HEK293T (cell line): ENCODE measurements at regions of chr10 and their contacts with region 1.

Region 1: DNA sequence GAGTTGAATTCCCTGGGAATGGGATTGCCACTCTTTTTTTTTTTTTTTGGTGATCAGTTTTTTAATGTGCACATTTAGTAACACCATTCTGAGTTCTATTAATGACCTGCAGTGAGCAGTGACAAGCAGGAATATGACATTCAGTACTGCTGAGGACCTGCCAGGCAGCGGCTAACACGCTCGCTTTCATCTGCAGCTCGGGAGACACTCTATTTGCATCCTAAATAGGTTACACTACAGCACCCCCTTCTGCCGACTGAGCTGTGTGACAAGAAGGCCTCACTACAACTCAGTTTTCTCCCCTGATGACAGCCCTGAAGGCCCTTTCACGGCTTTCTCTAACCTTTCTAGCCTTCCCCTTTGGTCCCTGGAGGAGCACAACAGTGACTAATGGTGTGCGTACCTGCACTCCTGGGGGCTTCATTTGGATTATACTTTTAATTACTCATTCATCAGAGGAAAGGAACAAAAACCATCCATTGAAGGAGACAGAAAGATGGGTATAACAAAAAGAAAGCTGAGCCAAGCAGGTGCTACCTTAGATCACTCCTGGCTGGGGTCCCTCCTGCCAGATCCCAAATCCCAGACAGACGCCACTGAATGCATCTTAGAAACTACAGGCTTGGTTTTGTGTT is 872.4 kb downstream of the LRMDA start:
- DNase-seq: peak; percentile 81

Region 2: DNA sequence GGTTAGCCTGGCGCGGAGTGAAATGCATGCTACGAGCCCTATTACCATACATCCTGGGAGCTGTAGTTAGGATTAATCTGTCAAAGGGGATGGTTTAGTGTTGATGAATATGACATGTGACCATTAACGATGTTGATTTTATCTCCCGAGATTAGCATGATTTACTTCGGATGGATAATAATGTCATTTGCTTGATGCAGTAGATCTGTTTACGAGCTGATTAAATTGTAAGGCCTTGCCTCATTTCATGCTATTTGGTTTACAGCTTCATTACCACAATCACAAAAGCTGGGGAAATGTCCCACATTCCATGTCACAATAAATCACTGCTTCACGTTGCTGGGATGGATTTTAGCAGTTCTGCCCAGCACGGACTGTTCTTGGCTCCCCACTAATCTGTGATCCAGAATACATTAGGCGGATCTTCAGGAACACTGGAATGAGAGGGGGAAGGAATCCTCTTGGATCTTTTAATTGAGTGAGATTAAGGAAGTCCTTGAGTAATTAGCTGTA is 924.5 kb before region 1 on chr10:
- CTCF ChIA-PET with region 1: interaction called, 11 read pairs
- POLR2A ChIA-PET with region 1: no interaction called
- DNase-seq: peak; percentile 68

Region 3: GRCh38 chr10:76036111-76036940 is 267.5 kb before region 1 on chr10:
- CTCF ChIA-PET with region 1: interaction called, 13 read pairs
- POLR2A ChIA-PET with region 1: no interaction called
- DNase-seq: peak; percentile 77

Region 4: GRCh38 chr10:76086761-76087639 is 216.8 kb before region 1 on chr10:
- CTCF ChIA-PET with region 1: interaction called, 12 read pairs
- POLR2A ChIA-PET with region 1: no interaction called
- DNase-seq: peak; percentile 76

Region 5: GRCh38 chr10:76113959-76114358 is 189.8 kb before region 1 on chr10:
- CTCF ChIA-PET with region 1: interaction called, 10 read pairs
- POLR2A ChIA-PET with region 1: interaction called, 9 read pairs
- DNase-seq: peak; percentile 39